ENCODE measurements at regions of chr5 and their contacts with region 1.

Region 1: DNA sequence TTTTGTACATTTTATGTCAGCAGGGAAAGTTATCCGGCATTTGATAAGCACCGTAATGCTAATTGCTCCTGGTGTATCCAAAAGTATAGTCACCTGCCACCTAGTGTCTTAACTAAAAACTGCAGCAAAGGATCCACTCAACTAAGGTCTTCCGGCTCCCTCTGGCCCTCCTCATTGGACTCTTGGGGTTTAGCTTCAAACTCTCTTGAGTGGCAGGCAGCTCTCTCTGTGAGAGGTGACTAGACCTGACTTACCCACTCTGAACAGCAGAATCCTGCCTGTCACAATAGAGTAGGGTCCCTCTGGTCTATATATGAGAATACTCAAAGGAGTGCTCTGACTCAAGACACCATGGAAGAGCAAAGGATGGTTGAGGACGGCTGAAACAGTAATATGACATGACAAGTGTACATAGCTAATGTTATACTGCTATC is 60.3 kb upstream of the CAST start:
- DNase-seq: peak; percentile 69
- ATAC-seq: peak; percentile 77
- H3K4me3 Mint-ChIP-seq: no peak overlapping the region
- H3K27ac Mint-ChIP-seq: no peak overlapping the region
- H3K4me1 Mint-ChIP-seq: peaks cover 13% of the 10 kb centered on the region
- H3K27me3 Mint-ChIP-seq: peaks cover 7% of the 10 kb centered on the region
- CTCF ChIP-seq: peak; percentile 81

Region 2: DNA sequence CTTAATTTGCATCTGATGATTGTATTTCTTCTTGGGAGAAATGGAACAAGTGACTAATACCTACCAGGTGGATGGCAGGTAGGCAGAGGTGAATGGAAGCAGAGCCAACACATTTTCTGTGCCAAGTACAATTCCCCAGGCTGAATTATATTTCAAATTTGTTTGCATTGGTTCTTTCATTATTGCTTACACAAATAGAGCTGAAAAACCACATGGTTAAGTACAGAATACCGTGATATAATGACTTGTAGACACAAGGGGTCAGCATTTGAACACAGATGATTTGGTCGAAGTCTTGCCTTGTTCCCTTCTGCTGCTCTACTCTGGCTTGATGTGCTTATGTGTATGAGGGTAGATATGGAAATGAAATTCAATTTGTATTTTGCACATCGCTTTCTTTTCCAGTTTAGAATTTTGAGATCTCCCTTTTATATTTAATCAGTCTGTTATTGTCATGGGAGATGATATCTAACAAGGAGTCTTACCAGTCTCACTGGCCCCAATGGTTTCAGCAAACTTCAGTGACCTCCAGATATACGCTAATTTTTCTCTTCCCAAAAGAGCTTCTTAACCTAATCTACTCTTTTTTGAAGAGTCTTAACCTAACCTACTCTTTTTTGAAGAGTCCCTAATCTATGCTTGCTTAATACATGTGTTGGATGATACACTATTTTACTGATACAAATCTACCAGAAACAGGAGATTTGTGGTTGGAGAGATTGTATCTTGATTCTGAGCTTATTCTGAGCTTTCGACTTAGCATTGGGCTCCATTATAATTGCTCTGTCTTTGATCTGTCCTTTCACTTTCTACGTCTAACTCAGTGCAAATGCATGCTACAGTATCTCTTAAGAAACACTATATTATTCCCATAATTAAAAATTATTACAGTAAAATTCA is 256.9 kb before region 1 on chr5:
- CTCF ChIA-PET with region 1: interaction called, 108 read pairs
- POLR2A ChIA-PET with region 1: no interaction called
- intact Hi-C with region 1: loop called (anchors 2 kb)
- DNase-seq: peak; percentile 18
- ATAC-seq: peak; percentile 89
- H3K4me3 Mint-ChIP-seq: no peak overlapping the region
- H3K27ac Mint-ChIP-seq: no peak overlapping the region
- H3K4me1 Mint-ChIP-seq: peaks cover 14% of the 10 kb centered on the region
- H3K27me3 Mint-ChIP-seq: peaks cover 17% of the 10 kb centered on the region
- CTCF ChIP-seq: peak; percentile 56

Region 3: GRCh38 chr5:96439477-96440184 is 162.2 kb before region 1 on chr5:
- CTCF ChIA-PET with region 1: interaction called, 19 read pairs
- POLR2A ChIA-PET with region 1: no interaction called
- intact Hi-C with region 1: loop called (anchors 2 kb)
- DNase-seq: peak; percentile 8
- ATAC-seq: peak; percentile 53
- H3K4me3 Mint-ChIP-seq: no peak overlapping the region
- H3K27ac Mint-ChIP-seq: no peak overlapping the region
- H3K4me1 Mint-ChIP-seq: peaks cover 6% of the 10 kb centered on the region
- H3K27me3 Mint-ChIP-seq: peaks cover 30% of the 10 kb centered on the region
- CTCF ChIP-seq: no peak

Region 4: DNA sequence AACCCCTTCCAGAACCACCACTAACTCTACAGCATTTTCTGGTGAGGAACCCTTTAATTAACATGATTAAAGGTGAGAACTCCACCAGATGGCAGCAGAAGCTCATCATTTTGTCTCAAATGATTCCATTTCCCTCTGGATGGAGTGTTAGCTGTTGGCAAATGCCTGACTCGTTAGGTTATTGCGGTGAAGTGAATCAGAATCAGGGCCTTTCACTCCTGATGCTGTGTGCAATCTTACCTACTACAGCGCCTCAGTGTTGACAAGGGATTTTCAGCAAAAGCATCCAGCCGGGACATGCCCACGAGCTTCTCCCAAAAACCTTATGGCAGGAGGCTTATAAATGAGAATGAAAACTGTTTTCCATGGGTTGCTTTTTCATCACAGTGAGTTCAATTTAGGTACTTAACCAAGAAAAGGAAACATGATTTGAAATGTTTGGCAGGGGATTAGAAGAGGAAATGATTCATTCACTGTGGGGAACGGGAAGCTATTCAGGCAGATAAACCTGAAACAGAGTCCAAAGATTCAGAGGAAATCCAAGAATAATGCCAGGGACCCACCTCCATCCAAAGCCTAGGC is 12.4 kb after region 1 on chr5:
- CTCF ChIA-PET with region 1: interaction called, 37 read pairs
- POLR2A ChIA-PET with region 1: no interaction called
- intact Hi-C with region 1: no loop called
- DNase-seq: peak; percentile 59
- ATAC-seq: peak; percentile 51
- H3K4me3 Mint-ChIP-seq: no peak overlapping the region
- H3K27ac Mint-ChIP-seq: no peak overlapping the region
- H3K4me1 Mint-ChIP-seq: peaks cover 4% of the 10 kb centered on the region
- H3K27me3 Mint-ChIP-seq: peaks cover 11% of the 10 kb centered on the region
- CTCF ChIP-seq: peak; percentile 80

Region 5: DNA sequence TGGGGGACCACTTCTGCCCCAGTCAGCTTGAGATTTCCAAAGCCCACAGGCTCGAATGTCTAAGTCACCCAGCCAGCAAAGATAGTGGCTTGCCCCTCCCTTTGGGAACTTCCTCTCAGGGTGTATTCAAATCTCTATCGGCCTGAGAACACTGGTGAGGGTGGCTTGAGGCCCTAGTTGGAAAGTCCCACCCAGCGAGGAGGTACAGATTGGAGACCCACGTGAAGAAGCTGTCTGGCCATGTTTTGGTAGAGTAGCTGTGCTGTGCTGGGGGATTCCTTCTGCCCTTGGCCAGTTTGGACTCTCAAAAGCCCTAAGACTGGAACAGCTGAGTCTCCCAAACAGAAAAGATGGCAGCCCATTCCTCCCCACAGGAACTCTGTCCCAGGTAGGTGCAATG is 753.9 kb after region 1 on chr5:
- CTCF ChIA-PET with region 1: no interaction called
- POLR2A ChIA-PET with region 1: no interaction called
- intact Hi-C with region 1: no loop called
- DNase-seq: no peak
- ATAC-seq: no peak
- H3K4me3 Mint-ChIP-seq: no peak overlapping the region
- H3K27ac Mint-ChIP-seq: no peak overlapping the region
- H3K4me1 Mint-ChIP-seq: no peaks in the 10 kb centered on the region
- H3K27me3 Mint-ChIP-seq: no peaks in the 10 kb centered on the region
- CTCF ChIP-seq: no peak